B cell (primary cell): ENCODE measurements at regions of chr6 and their contacts with region 1.

Region 1: DNA sequence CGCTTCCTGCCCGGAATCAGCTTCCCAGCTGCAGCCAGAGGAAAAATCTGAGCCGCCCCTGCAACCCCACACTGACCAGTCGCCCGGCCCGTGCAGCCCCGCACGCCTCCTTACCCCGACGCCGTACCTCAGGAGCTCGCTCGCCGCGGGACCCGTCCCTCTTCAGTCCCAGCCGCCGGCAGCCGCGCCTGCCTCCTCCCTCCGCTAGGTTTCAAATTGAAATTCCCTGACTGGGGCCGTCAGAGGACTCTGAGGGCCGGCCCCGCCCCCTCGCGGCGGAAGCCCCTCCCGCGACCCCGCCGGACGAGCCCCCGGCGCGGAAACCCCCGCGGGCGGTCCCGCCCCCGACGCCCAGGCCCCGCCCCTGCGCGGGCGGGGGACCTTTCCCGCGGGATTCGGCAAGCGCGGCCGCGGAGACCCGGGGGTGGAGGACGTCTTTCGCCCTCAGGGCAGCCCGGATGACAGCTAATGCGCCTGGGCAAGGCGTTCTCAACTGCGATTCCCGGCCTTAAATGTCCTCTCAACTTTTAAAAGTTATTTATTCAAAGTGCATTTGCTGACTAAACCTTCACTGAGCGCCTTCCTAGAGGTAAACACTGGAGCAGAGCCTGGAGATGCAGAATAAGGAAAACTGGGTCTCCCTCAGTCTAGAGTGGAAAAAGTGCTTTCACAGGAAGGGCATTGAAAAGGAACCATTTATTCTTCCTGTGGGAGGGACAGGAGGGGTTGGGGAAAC is at the start of gene EPB41L2:
- DNase-seq: peak; percentile 93
- ATAC-seq: peak; percentile 89
- H3K4me3 ChIP-seq: peak within 1 kb of the TSS; percentile 73 to 94 (median 90)
- H3K4me3 Mint-ChIP-seq: peak within 1 kb of the TSS; percentile 92
- H3K27ac ChIP-seq: peak within 1 kb of the TSS; percentile 72 to 78
- H3K27ac Mint-ChIP-seq: peak within 1 kb of the TSS; percentile 81
- H3K4me1 ChIP-seq: peaks cover 27 to 32% of the 10 kb centered on the region in 2 donors
- H3K4me1 Mint-ChIP-seq: peaks cover 33% of the 10 kb centered on the region
- H3K27me3 ChIP-seq: no peaks in the 10 kb centered on the region
- H3K27me3 Mint-ChIP-seq: no peaks in the 10 kb centered on the region
- CTCF ChIP-seq: peak; percentile 31
- total RNA-seq, gene EPB41L2: 59.8 and 61.0 TPM in 2 replicates

Region 2: DNA sequence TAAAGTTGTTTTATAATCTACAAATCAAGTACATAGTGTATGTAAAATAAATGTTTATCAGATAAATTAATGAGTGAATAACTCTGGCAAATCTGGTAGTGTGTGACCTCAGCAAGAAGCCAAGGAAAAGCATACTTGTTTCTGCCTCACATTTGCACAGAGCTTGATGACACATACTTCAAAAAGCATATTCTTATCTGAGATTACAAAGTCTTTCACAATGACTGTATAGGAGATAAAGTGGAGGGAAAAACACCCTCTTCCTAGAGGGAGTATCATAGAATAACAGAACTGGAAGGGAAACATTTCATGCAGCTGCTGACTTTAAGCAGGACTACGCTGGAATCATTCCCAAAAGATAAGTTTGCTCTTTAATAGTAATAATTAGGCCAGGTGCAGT is 44.0 kb after region 1 on chr6:
- CTCF ChIA-PET with region 1: interaction called, 4 read pairs
- POLR2A ChIA-PET with region 1: no interaction called
- intact Hi-C with region 1: loop called (anchors 2 kb)
- DNase-seq: no peak
- ATAC-seq: no peak
- H3K4me3 ChIP-seq: no peak overlapping the region
- H3K4me3 Mint-ChIP-seq: no peak overlapping the region
- H3K27ac ChIP-seq: no peak overlapping the region
- H3K27ac Mint-ChIP-seq: no peak overlapping the region
- H3K4me1 ChIP-seq: peaks cover 17% of the 10 kb centered on the region in 2 donors
- H3K4me1 Mint-ChIP-seq: peaks cover 22% of the 10 kb centered on the region
- H3K27me3 ChIP-seq: no peaks in the 10 kb centered on the region
- H3K27me3 Mint-ChIP-seq: no peaks in the 10 kb centered on the region
- CTCF ChIP-seq: no peak

Region 3: DNA sequence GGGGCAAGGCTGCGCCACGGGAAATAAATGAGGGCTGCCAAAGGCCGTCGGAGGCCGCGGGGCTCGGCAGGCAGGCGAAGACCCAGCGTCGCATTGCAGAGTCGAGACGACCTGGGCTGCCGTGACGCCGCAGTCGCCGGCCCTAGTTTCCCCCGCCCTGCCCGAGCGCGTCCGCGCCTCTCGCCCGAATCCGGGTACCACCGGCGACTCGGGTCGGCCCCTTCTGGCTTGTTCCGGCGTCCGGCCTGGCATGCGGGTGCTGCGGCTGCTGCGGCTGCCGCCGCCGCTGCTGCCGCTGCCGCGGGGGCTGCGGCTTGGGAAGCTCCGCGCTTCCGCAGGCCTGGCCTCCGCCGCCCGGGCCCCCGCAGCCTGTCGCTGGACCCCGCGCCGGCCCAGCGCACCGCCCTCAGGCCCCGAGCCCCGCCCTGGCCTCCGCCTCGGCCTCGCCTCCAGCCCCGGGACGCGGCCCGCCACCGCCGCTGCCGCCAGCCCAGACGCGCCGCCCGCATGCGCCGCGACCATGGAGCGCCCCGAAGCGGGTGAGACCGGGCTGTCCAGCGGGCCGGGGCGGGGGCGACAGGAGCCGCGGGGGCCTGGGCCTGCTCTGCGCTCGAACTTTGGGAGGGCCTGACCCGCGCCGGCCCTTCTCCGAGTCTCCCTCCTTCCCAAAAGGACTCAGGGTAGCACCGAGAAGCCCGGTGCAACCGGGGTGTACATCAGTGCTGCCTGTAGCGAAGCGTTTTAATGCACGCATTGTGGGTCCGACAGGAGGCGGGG is 72.2 kb after region 1 on chr6 and contains the start of gene AKAP7:
- CTCF ChIA-PET with region 1: no interaction called
- POLR2A ChIA-PET with region 1: no interaction called
- intact Hi-C with region 1: loop called (anchors 2 kb)
- DNase-seq: peak; percentile 78
- ATAC-seq: peak; percentile 77
- H3K4me3 ChIP-seq: peak within 1 kb of the TSS; percentile 55 to 82 (median 76)
- H3K4me3 Mint-ChIP-seq: peak within 1 kb of the TSS; percentile 95
- H3K27ac ChIP-seq: peak within 1 kb of the TSS; percentile 66 to 78
- H3K27ac Mint-ChIP-seq: peak within 1 kb of the TSS; percentile 93
- H3K4me1 ChIP-seq: peaks cover 9 to 13% of the 10 kb centered on the region in 2 donors
- H3K4me1 Mint-ChIP-seq: peaks cover 23% of the 10 kb centered on the region
- H3K27me3 ChIP-seq: no peaks in the 10 kb centered on the region
- H3K27me3 Mint-ChIP-seq: no peaks in the 10 kb centered on the region
- CTCF ChIP-seq: no peak
- total RNA-seq, gene AKAP7: 8.3 and 10.8 TPM in 2 replicates